Cardiac septum (tissue), 1 donor: ENCODE measurements at regions of chr2 and their contacts with region 1.

Region 1: DNA sequence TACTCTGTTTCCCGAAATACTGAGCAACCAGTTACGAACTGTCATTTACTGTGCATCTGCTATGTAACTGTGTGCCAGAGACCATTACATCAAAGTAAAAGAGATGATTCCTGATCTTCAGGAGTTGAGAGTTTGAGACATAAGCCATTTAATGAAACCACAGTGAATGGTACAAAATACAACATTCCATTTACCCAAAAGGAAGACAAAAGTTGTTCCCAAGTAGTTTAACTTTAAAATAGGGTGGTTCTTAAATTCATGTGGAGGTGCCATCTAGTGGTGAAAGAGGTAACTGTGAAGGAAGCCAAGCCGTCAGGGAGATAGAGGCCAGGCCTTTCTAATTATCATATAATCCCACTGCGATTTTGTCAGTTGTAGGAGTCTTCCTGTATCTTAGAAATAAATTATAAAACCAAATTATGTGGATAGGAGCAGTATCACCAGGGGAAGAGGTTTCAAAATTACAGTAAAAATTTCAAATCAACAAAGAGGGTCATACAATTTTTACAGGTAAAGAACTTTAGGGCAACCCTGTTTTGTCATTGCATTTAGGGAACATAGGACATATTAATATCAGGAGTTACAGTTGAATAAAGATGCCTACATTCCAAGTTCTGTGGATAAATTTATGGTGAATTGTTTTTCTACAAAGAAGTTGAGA is 67.7 kb downstream of the EPAS1 start:
- DNase-seq: no peak

Region 2: GRCh38 chr2:46062637-46063412 is 302.1 kb before region 1 on chr2:
- intact Hi-C with region 1: loop called (anchors 5 kb)
- DNase-seq: peak; percentile 90

Region 3: DNA sequence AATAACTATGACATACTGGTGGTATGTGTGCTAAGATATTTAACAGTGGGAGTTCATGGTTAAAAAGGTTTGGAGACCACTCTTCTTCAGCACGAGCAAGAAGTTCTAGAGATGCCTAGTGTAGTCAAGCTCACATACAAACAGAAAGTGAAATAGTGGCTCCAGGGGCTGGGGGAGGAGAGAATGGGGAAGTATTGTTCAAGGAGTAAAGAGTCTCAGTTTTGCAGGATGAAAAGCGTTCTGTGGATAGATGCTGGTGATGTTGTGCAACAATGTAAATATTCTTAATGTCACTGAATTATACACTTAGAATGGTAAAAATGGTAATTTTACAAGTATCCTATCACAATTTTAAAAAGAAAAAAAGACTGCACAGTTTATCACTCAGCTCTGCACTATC is 96.7 kb before region 1 on chr2:
- intact Hi-C with region 1: no loop called
- DNase-seq: no peak